ENCODE measurements at regions of chr3 and their contacts with region 1.

Region 1: DNA sequence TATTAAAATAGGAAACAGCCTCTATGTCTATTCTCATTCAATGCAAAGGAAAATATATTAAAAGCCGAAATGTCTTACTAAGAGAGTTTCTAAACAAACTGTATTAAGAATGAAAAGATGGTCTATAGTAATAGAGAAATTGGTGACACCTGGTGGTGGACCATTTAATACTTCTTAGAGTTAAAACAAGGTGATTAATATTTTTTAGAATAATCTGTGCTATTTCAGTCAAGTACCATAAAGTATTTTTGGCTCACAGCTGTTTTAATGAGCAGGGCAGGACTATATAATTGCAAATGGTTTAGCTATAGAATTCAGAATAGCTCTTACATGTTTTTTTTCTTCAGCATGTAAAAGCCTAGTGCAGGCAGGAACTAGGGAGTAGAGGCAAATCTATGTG is 55.7 kb downstream of the SYNPR start:
- DNase-seq: no peak
- ATAC-seq: no peak
- H3K4me3 ChIP-seq: no peak overlapping the region
- H3K27ac ChIP-seq: no peak overlapping the region
- H3K4me1 ChIP-seq: no peaks in the 10 kb centered on the region
- H3K27me3 ChIP-seq: no peaks in the 10 kb centered on the region
- CTCF ChIP-seq: peak in 1 of 3 experiments; percentile 1; a peak in 1 of 6 replicates
- EP300 ChIP-seq: no peak
- POLR2A ChIP-seq: no peak
- RAD21 ChIP-seq: no peak

Region 2: DNA sequence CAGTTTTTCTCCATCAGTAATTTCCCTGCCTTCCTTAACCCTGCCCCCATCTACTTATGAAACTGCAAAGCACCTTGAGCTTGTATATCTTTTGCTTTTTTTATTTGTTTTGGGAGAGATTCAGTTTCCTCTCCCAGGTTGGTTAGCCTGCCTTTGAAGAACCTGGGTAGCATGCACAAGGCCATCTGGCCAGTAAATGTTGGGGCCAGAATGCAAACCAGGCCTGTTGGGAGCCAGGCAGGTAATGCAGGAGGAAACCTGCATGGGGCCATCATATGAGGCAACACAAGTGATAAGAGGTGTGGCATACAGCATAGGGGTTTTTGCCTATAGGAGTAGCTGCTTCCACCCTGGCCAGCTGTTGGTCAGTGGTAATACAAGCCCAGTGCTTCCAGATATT is 38.0 kb before region 1 on chr3:
- CTCF ChIA-PET with region 1: no interaction called
- POLR2A ChIA-PET with region 1: no interaction called
- RAD21 ChIA-PET with region 1: no interaction called
- SMC1A ChIA-PET with region 1: no interaction called
- in situ Hi-C with region 1: no loop called
- intact Hi-C with region 1: no loop called
- DNase-seq: no peak
- ATAC-seq: no peak
- H3K4me3 ChIP-seq: no peak overlapping the region
- H3K27ac ChIP-seq: no peak overlapping the region
- H3K4me1 ChIP-seq: no peaks in the 10 kb centered on the region
- H3K27me3 ChIP-seq: no peaks in the 10 kb centered on the region
- CTCF ChIP-seq: no peak
- EP300 ChIP-seq: no peak
- POLR2A ChIP-seq: no peak
- RAD21 ChIP-seq: no peak

Region 3: GRCh38 chr3:63364910-63365431 is 31.1 kb after region 1 on chr3:
- CTCF ChIA-PET with region 1: no interaction called
- POLR2A ChIA-PET with region 1: interaction called, 14 read pairs
- RAD21 ChIA-PET with region 1: no interaction called
- SMC1A ChIA-PET with region 1: interaction called, 3 read pairs
- in situ Hi-C with region 1: no loop called
- intact Hi-C with region 1: no loop called
- DNase-seq: no peak
- ATAC-seq: no peak
- H3K4me3 ChIP-seq: no peak overlapping the region
- H3K27ac ChIP-seq: no peak overlapping the region
- H3K4me1 ChIP-seq: no peaks in the 10 kb centered on the region
- H3K27me3 ChIP-seq: no peaks in the 10 kb centered on the region
- CTCF ChIP-seq: peak in 1 of 3 experiments; percentile 6; a peak in 1 of 6 replicates
- EP300 ChIP-seq: no peak
- POLR2A ChIP-seq: no peak
- RAD21 ChIP-seq: no peak